Motor neuron (in vitro differentiated cells): ENCODE measurements at regions of chr2 and their contacts with region 1.

Region 1: DNA sequence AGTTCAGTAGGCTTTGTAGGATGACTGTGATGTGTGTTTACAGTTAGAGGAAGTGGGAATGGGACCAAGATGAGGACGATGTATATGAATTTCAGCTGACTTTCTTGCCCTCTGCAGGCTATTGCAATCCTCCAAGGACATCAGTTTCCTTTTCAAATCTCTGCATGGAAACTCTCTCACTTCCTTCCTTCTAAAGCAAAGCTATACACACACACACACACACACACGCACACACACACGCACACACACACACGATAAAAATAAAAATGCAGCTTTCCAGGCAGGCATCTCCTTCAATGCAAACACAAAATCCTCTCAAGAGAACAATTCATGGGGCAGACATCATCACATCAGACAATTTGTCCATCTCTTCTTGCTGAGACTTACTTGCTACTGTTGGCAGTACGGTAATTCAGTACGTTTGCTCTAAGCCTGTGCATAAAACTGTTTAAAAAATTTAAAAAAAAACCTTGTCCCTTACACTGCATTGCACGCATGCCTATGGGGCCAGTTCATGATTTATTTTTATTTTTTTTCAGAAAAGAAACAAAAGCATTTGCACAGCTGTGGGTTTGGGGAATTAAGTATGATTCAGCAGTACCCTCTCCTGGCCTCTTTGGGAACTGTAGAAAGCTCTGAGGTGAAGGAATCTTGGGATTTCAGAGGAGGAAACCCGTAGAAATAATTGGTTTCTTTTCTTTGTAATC is 27.1 kb upstream of the ICOS start:
- ATAC-seq: peak; percentile 76 to 97 (median 92)
- H3K4me3 ChIP-seq: no peak overlapping the region
- H3K27ac ChIP-seq: no peak overlapping the region
- H3K4me1 ChIP-seq: peaks cover 3 to 4% of the 10 kb centered on the region in 2 donors

Region 2: DNA sequence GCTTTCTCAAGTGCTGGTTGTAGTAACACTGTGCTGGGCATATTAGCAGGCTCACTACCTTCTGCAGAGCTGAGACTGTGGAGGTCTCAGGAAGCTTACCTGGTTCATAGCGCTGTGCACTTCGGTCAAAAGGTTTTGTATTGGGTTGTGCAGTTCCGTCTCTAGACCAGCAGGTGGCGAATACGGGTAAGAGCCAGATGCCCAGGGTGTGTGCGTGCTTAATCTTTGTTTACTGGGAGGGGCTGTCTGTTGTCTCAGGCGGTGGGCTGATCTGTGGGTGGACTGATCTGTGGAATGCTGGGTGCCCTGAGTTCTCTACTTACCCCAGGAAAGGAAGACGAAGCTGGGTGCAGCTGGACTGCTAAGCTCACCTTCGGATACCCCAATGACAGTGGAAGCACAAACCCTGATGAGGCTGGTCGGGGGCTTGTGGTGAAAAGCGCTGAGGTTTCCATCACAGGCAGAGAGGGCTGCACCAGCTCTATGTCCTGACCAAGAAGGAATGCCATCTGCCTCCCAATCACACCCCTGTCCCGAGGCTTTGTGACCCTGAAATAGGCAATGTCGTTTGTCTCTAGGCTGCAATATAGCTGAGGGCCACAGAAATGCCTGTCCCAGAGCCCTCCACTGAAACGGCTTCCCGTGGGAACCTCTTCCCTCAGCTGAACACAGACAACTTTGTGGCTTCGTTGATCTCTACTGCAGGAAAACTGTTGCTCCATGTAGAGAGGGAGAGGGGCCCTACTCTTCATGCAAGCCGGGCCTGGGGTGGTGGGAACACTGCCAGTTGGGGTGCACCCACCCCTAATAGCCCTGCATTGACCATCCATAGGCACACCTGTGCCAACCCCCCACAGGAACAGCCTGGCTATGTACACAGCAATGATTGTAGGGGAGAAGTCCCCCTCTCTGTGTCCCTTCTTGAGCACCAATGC is 1320.5 kb before region 1 on chr2:
- in situ Hi-C with region 1: loop called in 1 of 9 experiments (anchors 25 kb)
- ATAC-seq: peak; percentile 89 to 99 (median 97)
- H3K4me3 ChIP-seq: no peak overlapping the region
- H3K27ac ChIP-seq: no peak overlapping the region
- H3K4me1 ChIP-seq: peaks cover 3 to 6% of the 10 kb centered on the region in 2 donors

Region 3: DNA sequence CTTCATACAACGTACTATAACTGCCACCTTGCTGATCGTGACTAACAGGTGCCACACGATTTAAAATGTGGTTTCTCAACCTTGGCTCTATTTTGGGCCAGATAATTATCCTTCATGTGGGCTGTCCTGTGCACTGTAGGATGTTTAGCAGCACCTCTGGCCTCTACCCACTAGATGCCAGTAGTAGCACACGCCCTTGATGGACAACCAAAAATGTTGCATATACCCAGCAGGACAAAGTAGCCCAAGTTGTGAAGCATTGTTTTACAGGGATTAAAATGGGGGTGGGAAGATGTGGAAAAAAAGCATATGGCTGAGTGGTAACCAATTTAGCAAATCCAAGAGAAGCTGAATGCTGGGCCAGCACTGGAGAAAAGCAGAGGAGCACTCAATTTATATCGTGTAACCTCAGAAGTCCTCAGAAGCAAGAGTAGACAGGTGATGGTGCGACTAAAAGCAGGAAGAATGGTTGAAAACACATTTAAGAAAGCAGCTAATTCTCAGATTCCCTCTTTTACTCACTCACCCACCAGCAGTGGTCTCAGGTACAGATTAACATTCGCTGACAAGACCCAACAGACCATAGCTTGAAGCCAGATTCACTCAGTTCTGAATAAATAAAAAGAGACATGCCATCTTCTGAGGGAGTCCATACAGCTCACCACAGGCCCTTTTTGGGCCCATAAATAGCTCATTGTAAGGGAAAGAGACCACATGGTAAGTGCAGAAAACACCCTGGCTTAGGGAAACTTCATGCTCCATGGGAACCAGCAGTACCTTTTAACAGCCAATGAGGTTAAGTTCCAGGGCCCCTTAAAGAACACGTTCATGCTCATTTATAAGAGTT is 424.9 kb before region 1 on chr2:
- in situ Hi-C with region 1: loop called in 2 of 9 experiments (anchors 25 kb)
- ATAC-seq: peak in 3 of 8 experiments; percentile 87 to 92 (median 89)
- H3K4me3 ChIP-seq: no peak overlapping the region
- H3K27ac ChIP-seq: no peak overlapping the region
- H3K4me1 ChIP-seq: no peaks in the 10 kb centered on the region

Region 4: DNA sequence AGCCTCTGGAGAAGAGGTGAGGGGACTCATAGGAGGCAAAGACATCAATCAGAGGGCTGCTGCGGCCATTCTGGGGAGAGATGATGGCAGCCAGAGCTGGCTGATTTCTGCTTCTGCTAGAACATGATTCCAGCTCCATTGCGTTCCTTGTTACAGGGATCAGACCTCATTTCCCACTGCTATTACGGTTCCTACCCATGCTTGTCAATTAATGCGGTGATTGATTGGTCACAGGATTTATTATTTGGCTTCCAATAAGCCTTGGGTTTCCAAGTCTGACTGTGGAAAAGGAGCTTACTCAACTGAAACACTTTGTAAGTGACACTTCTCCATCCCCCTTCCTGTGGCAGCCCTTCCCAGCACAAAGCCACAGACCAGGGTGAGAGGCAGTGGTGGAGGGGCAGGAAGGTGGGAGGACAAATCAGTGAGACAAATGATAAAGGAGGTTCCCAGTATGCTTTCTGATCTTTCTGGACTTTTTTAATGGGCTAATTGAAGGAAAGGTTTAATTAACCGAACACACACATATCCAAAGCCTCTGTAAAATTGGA is 68.7 kb before region 1 on chr2:
- in situ Hi-C with region 1: loop called in 1 of 9 experiments (anchors 10 kb)
- ATAC-seq: peak in 3 of 8 experiments; percentile 21 to 63 (median 23)
- H3K4me3 ChIP-seq: no peak overlapping the region
- H3K27ac ChIP-seq: peak overlapping the region in 1 of 2 donors; percentile 58
- H3K4me1 ChIP-seq: peaks cover 0 to 5% of the 10 kb centered on the region in 2 donors